ENCODE measurements at regions of chr17 and their contacts with region 1.

Region 1: GRCh38 chr17:1390433-1391367 is 9.3 kb downstream of the YWHAE start:
- DNase-seq: no peak
- H3K4me3 ChIP-seq: no peak overlapping the region
- CTCF ChIP-seq: no peak

Region 2: GRCh38 chr17:1197781-1198490 is 192.8 kb before region 1 on chr17:
- CTCF ChIA-PET with region 1: no interaction called
- POLR2A ChIA-PET with region 1: no interaction called
- DNase-seq: no peak
- H3K4me3 ChIP-seq: no peak overlapping the region
- CTCF ChIP-seq: no peak

Region 3: GRCh38 chr17:1379930-1380313 is 10.8 kb before region 1 on chr17:
- CTCF ChIA-PET with region 1: interaction called, 26 read pairs
- POLR2A ChIA-PET with region 1: no interaction called
- DNase-seq: no peak
- H3K4me3 ChIP-seq: no peak overlapping the region
- CTCF ChIP-seq: no peak

Measured in AG04449 (cell line).